Posterior vena cava (tissue), 2 donors: ENCODE measurements at regions of chr15 and their contacts with region 1.

Region 1: DNA sequence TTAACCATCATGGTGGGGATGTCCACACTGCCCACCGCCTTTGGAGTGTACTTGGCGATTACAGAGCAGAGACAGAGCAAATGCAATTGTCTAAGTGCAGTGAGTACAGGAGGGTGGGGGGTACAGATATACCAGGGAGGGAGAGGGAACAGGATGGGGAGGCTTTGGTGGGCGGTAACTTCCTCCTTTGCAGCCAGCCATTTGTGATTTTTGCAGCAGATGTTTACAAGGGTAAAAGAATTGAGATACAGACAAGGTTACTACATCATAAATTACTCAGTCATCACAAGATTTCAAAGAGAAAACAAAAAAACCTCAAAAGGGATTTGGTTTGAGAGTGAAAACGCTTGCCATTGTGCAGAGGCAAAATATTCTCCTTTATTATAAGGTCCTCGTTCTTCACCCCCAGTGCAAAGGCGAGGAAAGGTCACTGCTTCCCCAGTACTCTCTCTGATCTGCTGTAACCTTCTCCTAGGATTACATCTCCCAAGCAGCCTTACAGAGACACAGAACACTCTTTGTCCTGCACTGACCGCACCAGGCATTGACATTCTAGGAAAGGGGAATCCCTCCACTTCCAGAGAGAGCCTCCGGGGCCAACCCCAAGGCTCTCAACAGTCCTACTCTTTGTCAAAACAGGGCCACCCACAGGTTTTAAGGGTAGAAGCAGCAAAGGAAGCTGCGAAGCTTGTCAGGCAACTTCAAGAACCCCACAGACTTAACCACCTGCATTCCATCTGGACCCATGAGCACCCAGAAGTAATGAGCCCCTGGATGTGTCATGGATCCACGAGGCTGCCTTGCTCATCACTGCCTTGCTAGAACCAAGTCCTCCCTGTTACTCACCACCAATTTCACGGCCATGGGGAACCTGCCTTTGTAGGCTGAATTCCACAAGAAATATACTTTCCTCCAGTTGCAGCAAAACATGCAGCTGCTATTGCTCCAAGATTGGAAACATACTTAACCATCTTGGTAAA is 117.3 kb downstream of the ADAMTS17 start:
- DNase-seq: peak; percentile 28

Region 2: DNA sequence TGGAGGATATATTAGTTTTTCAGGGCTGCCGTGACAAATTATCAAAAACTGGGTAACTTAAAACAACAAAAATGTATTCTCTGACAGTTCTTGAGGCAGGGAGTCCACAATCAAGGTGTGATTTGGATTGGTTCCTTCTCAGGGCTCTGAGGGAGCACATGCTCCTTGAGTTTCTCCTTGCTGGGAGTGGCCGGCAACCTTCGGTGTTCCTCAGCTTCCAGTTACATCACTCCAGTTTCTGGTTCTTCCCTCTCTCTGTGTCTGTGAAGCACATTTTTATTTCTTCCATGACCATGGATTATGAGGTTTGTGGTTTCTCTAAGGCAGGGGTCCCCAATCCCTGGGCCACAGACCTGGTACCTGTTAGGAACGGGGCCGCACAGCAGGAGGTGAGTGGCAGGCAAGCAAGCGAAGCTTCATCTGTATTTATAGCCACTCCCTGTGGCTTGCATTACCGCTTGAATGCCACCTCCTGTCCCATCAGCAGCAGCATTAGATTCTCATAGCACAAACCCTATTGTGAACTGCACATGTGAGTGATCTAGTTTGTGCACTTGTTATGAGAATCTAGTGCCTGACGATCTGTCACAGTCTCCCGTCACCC is 948.9 kb before region 1 on chr15:
- intact Hi-C with region 1: no loop called
- DNase-seq: no peak

Region 3: DNA sequence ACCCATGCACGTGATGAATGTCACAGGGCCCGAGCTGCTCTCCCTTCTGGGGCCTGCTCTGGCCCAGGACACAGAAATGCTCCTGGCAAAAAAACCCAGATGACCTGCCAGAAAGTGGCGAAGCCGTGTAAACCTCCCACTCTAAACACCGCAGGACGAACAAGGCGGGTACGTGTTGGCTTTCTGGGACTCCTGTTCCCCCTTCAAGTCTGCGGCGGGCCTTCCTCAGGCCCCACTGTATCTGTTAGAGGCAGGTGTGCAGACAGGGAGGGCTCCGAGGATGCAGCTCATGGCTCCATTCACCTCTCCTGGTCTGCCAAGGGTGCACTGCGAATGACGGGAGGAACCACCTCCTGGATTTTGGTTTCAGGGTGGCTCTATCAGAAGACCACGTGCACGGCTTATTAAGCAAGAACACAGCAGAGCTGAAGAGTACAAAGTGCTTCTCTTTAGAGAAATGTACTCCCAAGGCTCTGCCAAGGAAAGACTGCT is 56.6 kb before region 1 on chr15:
- intact Hi-C with region 1: loop called in 1 of 2 experiments (anchors 10 kb)
- DNase-seq: no peak

Region 4: DNA sequence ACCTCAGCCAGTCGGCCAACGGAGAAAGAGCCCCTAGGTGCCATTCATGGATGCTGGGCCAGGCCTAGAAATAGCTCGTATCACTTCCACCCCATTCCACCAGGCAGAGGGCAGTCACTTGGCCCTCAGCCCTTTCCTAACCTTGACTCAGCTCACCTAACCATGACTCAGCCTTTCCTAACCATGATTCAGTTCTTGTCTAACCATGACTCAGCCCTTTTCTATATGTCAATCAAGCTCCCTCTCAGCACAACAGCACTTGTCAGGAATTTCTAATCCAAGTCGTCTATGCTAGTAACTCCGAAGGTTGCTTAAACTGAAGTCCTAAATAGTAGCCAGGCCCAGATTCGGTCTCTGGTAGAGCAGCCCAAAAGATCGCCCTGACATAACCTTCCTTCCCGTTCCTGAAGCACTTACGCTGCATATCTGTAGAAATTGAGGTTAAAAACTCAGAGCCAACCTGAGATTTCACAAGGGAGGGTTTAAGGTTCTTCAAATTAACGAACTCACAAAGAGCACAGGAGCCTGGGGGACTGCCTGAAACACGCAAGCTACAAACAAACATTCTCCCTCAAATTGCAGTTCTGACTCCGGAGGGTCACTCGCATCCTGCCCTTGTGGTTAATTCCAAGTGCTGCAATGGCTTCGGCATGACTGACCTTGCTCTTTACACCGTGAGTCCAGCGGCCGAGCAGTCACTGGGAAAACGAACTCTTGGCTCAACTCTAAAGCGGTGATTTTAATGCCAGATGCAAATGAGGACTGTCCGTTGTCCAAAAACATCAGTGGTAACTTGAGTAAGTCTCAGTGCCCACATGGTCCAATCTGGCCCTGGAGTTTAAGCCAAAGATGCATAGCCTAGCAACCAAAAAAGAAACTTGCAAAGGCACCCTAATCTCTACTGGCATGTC is 17.3 kb after region 1 on chr15:
- intact Hi-C with region 1: no loop called
- DNase-seq: no peak

Region 5: DNA sequence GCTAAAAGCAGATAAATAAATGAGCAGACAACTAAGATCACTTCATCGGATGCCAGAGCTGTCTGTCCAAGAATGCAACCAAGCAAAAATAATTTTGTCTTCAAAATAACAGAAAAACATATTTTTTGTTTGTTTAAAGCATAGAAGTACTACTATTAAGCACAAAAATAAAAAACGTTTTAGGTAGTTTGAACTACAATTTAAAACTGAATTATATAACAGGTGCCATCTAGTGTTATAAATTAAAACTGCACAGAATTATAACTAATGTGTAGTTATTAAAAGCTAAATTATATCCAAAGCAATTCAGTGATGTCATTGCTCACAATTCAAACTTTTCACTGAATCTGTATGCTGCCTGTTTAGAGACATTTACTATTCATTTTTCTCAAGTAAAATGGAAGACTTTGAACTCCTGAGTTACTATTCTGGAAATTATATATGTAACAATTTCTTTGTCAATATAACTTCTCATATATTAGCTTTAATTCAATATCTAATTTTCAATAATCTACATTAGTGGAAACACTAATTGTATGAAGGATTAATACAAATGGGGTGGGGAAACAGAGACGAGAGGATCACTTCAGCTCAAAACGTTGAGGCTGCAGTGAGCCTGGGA is 348.0 kb after region 1 on chr15:
- intact Hi-C with region 1: no loop called
- DNase-seq: no peak